Spleen (tissue), 13 donors: ENCODE measurements at regions of chr1 and their contacts with region 1.

Region 1: DNA sequence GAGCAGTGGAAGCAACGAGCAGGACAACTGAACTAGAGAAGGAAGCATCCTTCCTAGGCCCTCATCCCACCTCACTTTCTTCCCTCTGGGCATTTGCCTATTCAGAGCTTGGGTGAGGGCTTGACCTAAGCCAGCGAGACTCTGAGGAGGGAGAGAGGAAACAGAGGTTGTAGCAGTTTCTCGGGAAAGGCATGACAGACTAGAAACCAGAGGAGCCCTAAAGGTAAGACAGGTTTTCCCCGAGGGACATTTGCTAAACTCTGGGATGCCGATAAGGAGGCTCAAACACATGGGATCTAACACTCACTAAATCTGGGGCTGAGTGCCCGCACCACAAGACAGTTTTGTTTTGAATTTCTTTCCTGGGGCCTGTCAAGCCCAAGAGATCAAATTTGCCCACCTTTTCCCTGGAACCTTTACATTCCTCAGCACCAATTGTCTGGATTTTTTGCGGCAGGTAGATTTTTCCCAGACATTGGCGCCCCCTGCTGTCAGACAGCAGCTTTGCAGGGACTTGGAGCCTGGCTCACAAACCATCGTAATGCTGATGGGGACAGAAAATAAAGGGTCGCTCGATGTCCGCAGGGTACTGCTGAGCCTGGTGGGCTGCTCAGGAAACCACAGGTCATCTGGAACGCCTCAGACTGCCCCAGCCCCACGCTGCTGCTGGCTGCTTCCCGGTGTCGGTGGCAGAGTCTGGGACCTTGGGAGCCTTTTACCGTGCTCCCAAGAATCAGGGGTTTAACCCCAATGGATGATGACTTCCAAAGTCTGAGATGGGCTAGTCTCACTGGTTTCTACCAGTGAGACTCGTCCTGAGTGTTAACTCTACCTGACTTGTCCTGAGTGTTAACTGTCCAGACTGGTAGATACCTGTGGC is 23.4 kb upstream of the TSPAN2 start:
- DNase-seq: peak; percentile 82
- H3K4me3 ChIP-seq: no peak overlapping the region
- H3K27ac ChIP-seq: no peak overlapping the region
- H3K4me1 ChIP-seq: peaks cover 0 to 17% (median 7%) of the 10 kb centered on the region in 6 donors
- H3K27me3 ChIP-seq: no peaks in the 10 kb centered on the region
- CTCF ChIP-seq: peak; percentile 77 to 97 (median 91)
- POLR2A ChIP-seq: no peak

Region 2: GRCh38 chr1:114982251-114982650 is 130.5 kb before region 1 on chr1:
- intact Hi-C with region 1: loop called (anchors 5 kb)
- DNase-seq: no peak
- H3K4me3 ChIP-seq: no peak overlapping the region
- H3K27ac ChIP-seq: no peak overlapping the region
- H3K4me1 ChIP-seq: no peaks in the 10 kb centered on the region
- H3K27me3 ChIP-seq: peaks cover 0 to 16% (median 0%) of the 10 kb centered on the region in 7 donors
- CTCF ChIP-seq: no peak
- POLR2A ChIP-seq: no peak

Region 3: GRCh38 chr1:115062542-115063011 is 50.2 kb before region 1 on chr1:
- intact Hi-C with region 1: no loop called
- DNase-seq: peak; percentile 91
- H3K4me3 ChIP-seq: no peak overlapping the region
- H3K27ac ChIP-seq: peak overlapping the region in 3 of 8 donors; percentile 5 to 53 (median 36)
- H3K4me1 ChIP-seq: peaks cover 0 to 23% (median 13%) of the 10 kb centered on the region in 6 donors
- H3K27me3 ChIP-seq: no peaks in the 10 kb centered on the region
- CTCF ChIP-seq: no peak
- POLR2A ChIP-seq: no peak

Region 4: DNA sequence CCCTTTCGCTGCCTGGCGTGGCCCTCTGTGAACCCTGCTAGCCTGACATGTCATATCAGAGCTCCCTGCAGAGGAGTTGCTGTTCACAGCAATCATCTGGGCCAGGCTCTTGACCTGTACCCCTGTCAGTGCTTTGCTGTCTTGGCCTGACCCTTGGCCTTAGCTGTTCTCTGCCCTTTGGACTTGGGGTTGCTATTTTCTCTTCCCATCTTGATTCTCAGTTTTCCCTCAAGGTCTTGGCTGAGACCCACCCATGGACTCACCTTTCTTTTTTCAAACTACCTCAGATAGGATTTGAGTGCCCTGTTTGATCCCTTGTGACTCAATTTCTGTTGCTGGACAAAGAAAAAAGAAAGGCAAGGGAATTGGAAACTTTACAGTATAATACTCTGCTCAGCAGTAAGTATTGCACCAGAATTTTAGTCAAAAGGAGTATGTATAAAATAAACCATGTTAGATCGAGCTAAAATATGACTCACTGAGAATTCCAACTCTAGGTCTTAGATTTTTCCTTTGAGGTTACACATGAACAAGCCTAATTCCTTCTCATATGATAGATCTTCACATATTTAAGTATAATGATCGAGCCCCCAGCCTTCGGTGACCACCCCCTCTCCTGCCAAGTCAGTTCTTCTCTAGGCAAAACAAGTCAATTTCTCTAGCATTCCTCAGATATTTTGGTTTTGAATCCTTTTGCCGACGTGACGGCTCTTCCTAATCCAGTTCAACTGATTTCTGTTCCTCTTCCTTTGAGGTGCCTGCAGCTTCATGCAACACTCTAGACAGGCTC is 114.8 kb after region 1 on chr1:
- intact Hi-C with region 1: no loop called
- DNase-seq: no peak
- H3K4me3 ChIP-seq: no peak overlapping the region
- H3K27ac ChIP-seq: peak overlapping the region in 1 of 8 donors; percentile 13
- H3K4me1 ChIP-seq: no peaks in the 10 kb centered on the region
- H3K27me3 ChIP-seq: no peaks in the 10 kb centered on the region
- CTCF ChIP-seq: no peak
- POLR2A ChIP-seq: no peak

Region 5: GRCh38 chr1:115289940-115290339 is 177.2 kb after region 1 on chr1:
- intact Hi-C with region 1: no loop called
- DNase-seq: no peak
- H3K4me3 ChIP-seq: no peak overlapping the region
- H3K27ac ChIP-seq: no peak overlapping the region
- H3K4me1 ChIP-seq: peaks cover 0 to 3% (median 0%) of the 10 kb centered on the region in 6 donors
- H3K27me3 ChIP-seq: peaks cover 0 to 15% (median 0%) of the 10 kb centered on the region in 7 donors
- CTCF ChIP-seq: no peak
- POLR2A ChIP-seq: no peak